Head of caudate nucleus (tissue), 42 donors: ENCODE measurements at regions of chr14 and their contacts with region 1.

Region 1: DNA sequence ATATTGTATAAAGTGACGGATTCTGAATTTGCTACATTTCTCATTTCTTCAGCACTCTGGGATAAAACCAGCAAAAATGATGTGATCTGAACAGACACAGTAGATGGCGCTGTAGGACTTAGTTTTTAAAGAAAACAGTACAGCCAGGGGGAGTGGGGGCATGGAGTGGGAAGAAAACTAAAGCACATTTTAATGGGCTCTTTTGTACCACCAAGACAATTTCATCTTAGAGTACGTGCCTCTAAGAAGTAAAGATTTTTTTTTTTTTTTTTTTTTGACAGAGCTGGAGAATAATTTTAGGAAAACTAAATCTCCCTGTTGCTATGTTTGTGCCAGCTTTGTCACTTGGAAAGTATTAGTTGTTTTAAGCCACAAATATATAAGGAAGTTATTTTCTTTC is 124.4 kb downstream of the RAD51B start:
- DNase-seq: peak in 36 of 42 donors; percentile 15 to 86 (median 51)

Region 2: GRCh38 chr14:68239988-68240771 is 296.2 kb after region 1 on chr14:
- intact Hi-C with region 1: loop called (anchors 5 kb)
- DNase-seq: no peak

Region 3: DNA sequence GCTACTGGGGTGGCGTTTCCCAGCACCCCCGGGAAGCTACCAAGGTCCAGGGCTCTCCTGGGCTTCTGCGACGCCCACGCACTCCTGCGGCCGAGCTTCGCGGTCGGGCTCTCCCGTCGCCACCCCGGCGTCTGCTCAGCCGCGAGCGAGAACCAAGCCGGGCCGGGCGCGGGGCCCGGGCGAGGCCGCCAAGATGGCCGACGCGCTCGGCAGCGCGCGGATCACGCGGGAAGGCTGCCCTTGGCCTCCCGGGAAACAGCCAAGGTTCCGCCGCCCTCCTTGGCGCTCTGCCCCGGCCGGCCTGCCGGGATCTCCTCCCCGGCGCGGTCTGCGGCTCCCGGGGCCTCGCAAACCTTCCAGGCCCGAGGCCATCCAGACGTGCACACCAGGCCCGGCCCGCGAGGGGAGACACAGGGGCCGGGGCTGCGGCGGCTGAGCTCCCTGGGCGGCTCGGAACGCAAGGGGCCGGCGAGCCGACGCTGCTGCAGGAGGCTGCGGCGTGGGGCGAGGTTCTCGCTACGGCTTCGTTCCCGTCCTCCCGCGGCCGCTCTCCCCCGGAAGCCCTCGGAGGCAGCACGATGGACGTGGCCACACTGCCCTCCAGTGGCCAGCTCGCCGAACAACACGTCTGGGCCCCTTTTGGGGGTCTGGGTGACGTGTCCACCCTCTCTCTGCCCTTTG is 872.5 kb after region 1 on chr14:
- intact Hi-C with region 1: loop called (anchors 5 kb)
- DNase-seq: peak; percentile 66 to 96 (median 89)